ENCODE measurements at regions of chr1 and their contacts with region 1.

Region 1: GRCh38 chr1:54218883-54219687 is 19.1 kb downstream of the MRPL37 start:
- DNase-seq: peak in 3 of 6 donors; percentile 53 to 62 (median 53)
- ATAC-seq: peak; percentile 43 to 75 (median 60)
- H3K4me3 ChIP-seq: no peak overlapping the region
- H3K27ac ChIP-seq: peak overlapping the region in 3 of 4 donors; percentile 5 to 73 (median 57)
- H3K4me1 ChIP-seq: peaks cover 9 to 17% (median 16%) of the 10 kb centered on the region in 3 donors
- H3K27me3 ChIP-seq: no peaks in the 10 kb centered on the region
- CTCF ChIP-seq: no peak

Region 2: GRCh38 chr1:54376430-54377039 is 157.4 kb after region 1 on chr1:
- intact Hi-C with region 1: loop called in 1 of 3 experiments (anchors 10 kb)
- DNase-seq: no peak
- ATAC-seq: peak in 3 of 4 donors; percentile 45 to 55 (median 50)
- H3K4me3 ChIP-seq: no peak overlapping the region
- H3K27ac ChIP-seq: peak overlapping the region in 3 of 4 donors; percentile 12 to 62 (median 61)
- H3K4me1 ChIP-seq: peaks cover 12 to 29% (median 26%) of the 10 kb centered on the region in 3 donors
- H3K27me3 ChIP-seq: no peaks in the 10 kb centered on the region
- CTCF ChIP-seq: no peak

Region 3: DNA sequence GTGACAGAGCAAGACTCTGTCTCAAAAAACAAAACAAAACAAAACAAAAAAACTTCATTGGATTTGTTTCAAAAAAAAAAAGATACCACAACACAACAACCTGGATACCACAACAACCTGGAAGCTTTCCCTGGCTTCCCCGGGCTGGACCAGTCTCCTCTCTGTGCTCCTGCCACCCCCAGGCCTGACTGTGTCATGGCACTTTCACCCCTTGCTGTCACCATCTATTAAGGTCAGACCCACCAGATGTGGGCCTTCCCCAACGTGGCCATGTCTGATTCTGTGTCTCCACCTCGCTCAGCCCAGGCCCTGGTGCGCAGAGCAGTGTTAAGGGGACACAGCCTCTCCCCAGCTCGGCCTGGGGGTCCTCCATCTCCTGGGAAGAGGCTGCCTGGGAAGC is 300.6 kb after region 1 on chr1:
- intact Hi-C with region 1: no loop called
- DNase-seq: no peak
- ATAC-seq: peak in 3 of 4 donors; percentile 25 to 50 (median 36)
- H3K4me3 ChIP-seq: no peak overlapping the region
- H3K27ac ChIP-seq: no peak overlapping the region
- H3K4me1 ChIP-seq: no peaks in the 10 kb centered on the region
- H3K27me3 ChIP-seq: no peaks in the 10 kb centered on the region
- CTCF ChIP-seq: no peak

Measured in pancreas (tissue), 10 donors.